ENCODE measurements at regions of chr3 and their contacts with region 1.

Region 1: GRCh38 chr3:102229062-102229655 is 205.7 kb upstream of the ZPLD1 start:
- H3K4me3 ChIP-seq: no peak overlapping the region
- H3K27ac ChIP-seq: no peak overlapping the region
- H3K4me1 ChIP-seq: no peaks in the 10 kb centered on the region
- CTCF ChIP-seq: peak; percentile 76

Region 2: GRCh38 chr3:101803173-101803782 is 425.9 kb before region 1 on chr3:
- CTCF ChIA-PET with region 1: interaction called, 127 read pairs
- POLR2A ChIA-PET with region 1: no interaction called
- H3K4me3 ChIP-seq: no peak overlapping the region
- H3K27ac ChIP-seq: no peak overlapping the region
- H3K4me1 ChIP-seq: no peaks in the 10 kb centered on the region
- CTCF ChIP-seq: no peak

Region 3: GRCh38 chr3:101809178-101810021 is 419.8 kb before region 1 on chr3:
- CTCF ChIA-PET with region 1: interaction called, 127 read pairs
- POLR2A ChIA-PET with region 1: no interaction called
- H3K4me3 ChIP-seq: no peak overlapping the region
- H3K27ac ChIP-seq: no peak overlapping the region
- H3K4me1 ChIP-seq: no peaks in the 10 kb centered on the region
- CTCF ChIP-seq: no peak

Region 4: GRCh38 chr3:101816215-101817149 is 412.7 kb before region 1 on chr3:
- CTCF ChIA-PET with region 1: interaction called, 127 read pairs
- POLR2A ChIA-PET with region 1: no interaction called
- H3K4me3 ChIP-seq: no peak overlapping the region
- H3K27ac ChIP-seq: no peak overlapping the region
- H3K4me1 ChIP-seq: no peaks in the 10 kb centered on the region
- CTCF ChIP-seq: no peak

Region 5: DNA sequence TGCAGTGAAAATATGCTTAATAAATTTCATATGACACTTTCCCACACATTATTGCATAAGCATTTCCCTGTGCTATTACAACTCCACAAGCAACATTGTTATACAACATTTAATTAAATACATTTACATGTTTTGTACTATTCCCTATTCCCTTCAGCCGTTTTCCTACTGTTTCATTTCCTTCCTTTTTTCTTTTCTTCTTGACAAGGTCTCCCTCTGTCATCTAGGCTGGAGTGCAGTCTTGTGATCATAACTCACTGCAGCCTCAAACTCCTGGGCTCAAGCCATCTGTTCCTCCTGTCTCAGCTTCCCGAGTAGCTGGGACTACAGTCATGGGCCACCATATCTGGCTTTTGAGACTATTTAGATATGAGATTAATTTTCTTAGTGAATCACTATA is 125.1 kb before region 1 on chr3:
- CTCF ChIA-PET with region 1: no interaction called
- POLR2A ChIA-PET with region 1: no interaction called
- H3K4me3 ChIP-seq: no peak overlapping the region
- H3K27ac ChIP-seq: no peak overlapping the region
- H3K4me1 ChIP-seq: no peaks in the 10 kb centered on the region
- CTCF ChIP-seq: no peak

Region 6: GRCh38 chr3:102529452-102529851 is 300.3 kb after region 1 on chr3:
- CTCF ChIA-PET with region 1: interaction called, 93 read pairs
- POLR2A ChIA-PET with region 1: no interaction called
- H3K4me3 ChIP-seq: no peak overlapping the region
- H3K27ac ChIP-seq: no peak overlapping the region
- H3K4me1 ChIP-seq: no peaks in the 10 kb centered on the region
- CTCF ChIP-seq: no peak

Region 7: GRCh38 chr3:102536456-102536855 is 307.3 kb after region 1 on chr3:
- CTCF ChIA-PET with region 1: interaction called, 93 read pairs
- POLR2A ChIA-PET with region 1: no interaction called
- H3K4me3 ChIP-seq: no peak overlapping the region
- H3K27ac ChIP-seq: no peak overlapping the region
- H3K4me1 ChIP-seq: no peaks in the 10 kb centered on the region
- CTCF ChIP-seq: no peak

Region 8: DNA sequence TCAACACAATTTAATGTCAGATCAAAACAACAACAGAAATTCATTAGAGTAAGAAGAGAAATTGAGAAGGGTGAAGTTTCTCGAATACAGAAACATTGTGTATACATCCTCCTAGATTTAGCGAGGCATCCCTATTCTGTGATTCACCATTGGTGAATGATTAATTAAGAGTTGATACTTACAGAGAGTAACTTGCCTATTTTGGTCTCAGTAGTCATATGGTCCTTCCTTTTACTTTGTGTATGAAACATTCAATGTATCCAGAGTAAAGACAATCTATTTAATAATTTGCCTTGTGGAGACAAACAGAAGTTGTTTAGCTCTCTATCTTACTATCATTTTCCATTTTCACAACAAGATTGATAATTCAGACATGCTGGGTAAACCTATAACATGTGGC is 637.7 kb after region 1 on chr3:
- CTCF ChIA-PET with region 1: no interaction called
- POLR2A ChIA-PET with region 1: no interaction called
- H3K4me3 ChIP-seq: no peak overlapping the region
- H3K27ac ChIP-seq: no peak overlapping the region
- H3K4me1 ChIP-seq: no peaks in the 10 kb centered on the region
- CTCF ChIP-seq: no peak

Measured in HEK293 (cell line).